MCF 10A (cell line): ENCODE measurements at regions of chr20 and their contacts with region 1.

Region 1: GRCh38 chr20:24992487-24993205 is at the start of gene APMAP:
- DNase-seq: peak; percentile 91
- H3K4me3 Mint-ChIP-seq: peak within 1 kb of the TSS; percentile 97
- H3K27ac Mint-ChIP-seq: peak within 1 kb of the TSS; percentile 97
- H3K4me1 Mint-ChIP-seq: peaks cover 60% of the 10 kb centered on the region
- H3K27me3 Mint-ChIP-seq: no peaks in the 10 kb centered on the region
- CTCF ChIP-seq: no peak
- total RNA-seq, gene APMAP: 75.3 and 104 TPM in 2 replicates

Region 2: DNA sequence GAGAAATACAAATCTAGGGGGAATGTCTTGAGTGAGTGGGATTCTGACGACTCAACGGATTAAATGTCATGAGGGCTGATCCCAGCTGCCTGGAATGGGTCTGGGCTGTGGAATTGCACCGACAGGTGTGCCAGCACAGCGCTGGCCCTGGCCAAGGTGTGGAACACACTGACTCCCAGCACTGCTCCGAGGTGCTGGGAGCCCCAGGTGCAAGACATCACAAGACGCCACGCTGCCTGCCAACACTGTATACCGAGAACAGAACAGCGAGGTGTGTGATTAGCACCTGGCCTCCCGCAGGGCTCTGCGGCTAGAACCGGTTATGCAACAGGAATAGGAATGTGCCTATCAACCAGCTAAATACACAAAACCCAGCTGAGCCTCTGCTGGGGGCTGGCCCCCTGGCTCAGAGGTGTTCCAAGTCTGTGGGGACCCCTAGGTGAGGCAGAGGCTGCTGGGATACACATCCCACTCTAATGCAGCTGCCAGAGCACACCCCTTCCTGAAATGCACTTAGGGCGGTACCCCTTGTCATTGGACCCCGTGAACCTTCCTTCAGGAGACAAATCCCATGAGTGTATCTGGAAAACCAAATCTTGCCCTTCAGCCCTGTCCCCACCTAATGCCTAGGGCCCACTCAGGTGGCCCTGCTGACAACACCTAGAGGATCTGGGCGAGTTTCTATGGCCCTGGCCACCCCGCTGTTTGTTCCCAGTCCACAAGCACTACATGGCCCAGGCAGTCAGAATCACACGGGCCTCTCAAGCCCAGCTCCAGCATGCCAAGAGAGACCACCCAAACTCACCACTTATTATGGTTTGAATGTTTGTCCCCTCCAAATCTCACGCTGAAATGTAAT is 24.8 kb after region 1 on chr20:
- CTCF ChIA-PET with region 1: interaction called, 19 read pairs
- POLR2A ChIA-PET with region 1: interaction called, 11 read pairs
- intact Hi-C with region 1: no loop called
- DNase-seq: peak; percentile 87
- H3K4me3 Mint-ChIP-seq: no peak overlapping the region
- H3K27ac Mint-ChIP-seq: peak overlapping the region; percentile 27
- H3K4me1 Mint-ChIP-seq: peaks cover 15% of the 10 kb centered on the region
- H3K27me3 Mint-ChIP-seq: no peaks in the 10 kb centered on the region
- CTCF ChIP-seq: no peak

Region 3: DNA sequence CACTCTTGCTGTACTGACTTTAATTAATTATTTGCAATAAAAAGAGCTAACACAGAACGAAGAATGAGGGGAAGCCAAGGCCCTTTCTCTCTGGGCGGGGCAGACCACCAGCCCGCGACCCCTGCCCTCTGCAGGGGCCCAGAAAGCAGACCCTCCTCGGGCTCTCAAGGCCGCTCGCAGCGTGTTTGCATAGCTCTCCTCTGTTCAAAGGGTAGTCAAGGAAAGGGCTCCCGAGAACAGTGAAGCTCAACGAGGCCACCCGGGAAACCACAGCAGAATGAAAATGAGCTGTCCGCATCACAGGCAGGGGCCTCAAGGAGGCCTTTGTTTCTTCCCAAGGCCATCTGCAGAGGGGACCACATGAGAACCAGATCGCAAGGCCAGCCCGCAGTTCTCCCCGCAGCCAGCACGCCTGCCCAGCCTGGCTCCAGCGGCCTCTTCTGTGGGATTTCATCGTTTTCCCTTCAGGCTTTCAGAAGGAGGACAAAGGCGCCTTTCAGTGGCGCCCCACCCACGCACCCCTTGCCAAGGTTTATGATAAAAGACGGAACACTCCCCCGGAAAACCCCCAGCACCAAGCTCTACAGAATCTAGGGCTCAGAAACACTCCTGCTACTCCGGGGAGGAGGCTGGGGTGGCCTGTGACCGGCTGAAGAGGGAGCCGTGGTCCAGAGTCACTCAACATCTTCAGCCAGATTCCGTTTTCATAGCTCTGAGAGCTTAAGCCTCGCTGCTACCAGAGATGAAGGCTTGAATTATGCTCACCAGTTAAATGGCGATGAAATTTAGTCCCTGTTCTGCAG is 40.0 kb after region 1 on chr20:
- CTCF ChIA-PET with region 1: interaction called, 43 read pairs
- POLR2A ChIA-PET with region 1: interaction called, 3 read pairs
- intact Hi-C with region 1: no loop called
- DNase-seq: no peak
- H3K4me3 Mint-ChIP-seq: no peak overlapping the region
- H3K27ac Mint-ChIP-seq: no peak overlapping the region
- H3K4me1 Mint-ChIP-seq: peaks cover 16% of the 10 kb centered on the region
- H3K27me3 Mint-ChIP-seq: no peaks in the 10 kb centered on the region
- CTCF ChIP-seq: no peak

Region 4: DNA sequence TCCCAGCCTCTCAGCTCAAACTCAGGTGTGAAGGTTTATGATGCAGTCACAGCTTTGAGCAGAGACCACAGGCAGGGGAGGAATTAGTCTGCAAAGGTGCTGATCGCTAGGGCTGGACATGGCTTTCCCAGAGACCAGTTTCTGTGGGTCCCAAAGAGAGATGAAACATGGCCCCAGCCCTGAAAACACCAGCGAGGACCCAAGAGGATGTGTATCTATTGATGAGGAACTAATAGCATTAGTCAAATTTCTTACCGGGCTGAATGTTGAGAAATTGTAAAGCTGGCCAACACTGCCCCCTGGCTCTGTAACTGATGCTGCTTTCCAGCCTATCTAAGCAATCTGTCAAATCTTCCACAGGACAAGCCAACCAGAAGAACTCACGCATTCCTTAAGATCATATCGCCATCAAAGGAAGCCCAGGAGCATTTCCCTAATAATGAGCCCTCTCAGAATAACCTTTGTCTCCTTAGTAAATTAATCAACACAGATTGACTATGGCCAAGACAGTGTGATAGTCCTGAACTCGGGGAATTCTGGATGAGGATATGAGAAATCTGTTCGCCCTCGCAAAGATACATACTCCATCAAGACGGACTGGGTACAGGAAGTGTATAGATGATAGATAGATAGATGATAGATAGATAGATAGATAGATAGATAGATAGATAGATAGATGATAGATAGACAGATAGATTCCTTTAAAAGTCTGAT is 73.1 kb after region 1 on chr20:
- CTCF ChIA-PET with region 1: interaction called, 500 read pairs
- POLR2A ChIA-PET with region 1: interaction called, 144 read pairs
- intact Hi-C with region 1: loop called (anchors 1 kb)
- DNase-seq: peak; percentile 59
- H3K4me3 Mint-ChIP-seq: no peak overlapping the region
- H3K27ac Mint-ChIP-seq: no peak overlapping the region
- H3K4me1 Mint-ChIP-seq: peaks cover 12% of the 10 kb centered on the region
- H3K27me3 Mint-ChIP-seq: peaks cover 68% of the 10 kb centered on the region
- CTCF ChIP-seq: peak; percentile 57

Region 5: DNA sequence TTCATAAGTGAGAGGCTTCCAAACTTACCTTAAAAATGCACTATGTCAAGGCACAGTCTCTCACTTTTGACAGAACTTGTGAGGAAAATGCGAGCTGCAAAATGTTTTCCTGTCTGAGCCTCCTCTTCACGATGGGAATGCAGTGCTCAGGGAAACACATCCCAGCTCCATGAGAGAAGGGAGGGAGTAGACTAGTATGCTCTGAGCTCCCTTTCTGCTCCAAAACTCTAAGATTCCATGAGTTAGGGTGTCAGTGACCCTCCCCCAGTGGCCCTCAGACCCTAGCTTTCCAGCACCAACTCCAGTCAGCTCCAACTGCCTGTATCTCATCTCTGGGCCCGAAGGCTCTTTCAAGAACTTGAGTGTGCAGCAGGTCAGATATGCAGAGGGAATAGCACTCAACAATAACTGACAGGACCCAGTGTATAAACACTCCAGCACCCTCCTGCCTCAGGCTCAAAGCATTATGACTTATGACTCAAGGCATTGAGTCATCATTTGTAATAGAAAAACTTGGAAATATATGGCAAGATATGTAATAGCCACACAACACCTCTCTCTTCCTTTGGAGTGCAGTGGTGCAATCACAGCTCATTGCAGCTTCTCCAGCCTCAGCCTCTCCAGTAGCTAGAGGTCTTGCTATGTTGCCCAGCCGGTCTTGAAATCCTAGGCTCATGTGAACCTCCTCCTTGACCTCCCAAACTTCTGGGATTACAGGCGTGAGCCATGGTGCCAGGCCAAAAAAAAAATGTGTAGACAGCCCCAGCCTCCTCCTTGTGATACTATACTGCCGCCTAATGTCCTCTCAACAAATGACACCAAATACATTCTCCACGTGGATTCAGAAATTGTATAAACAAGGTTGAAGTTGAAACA is 186.2 kb after region 1 on chr20:
- CTCF ChIA-PET with region 1: interaction called, 92 read pairs
- POLR2A ChIA-PET with region 1: interaction called, 57 read pairs
- intact Hi-C with region 1: loop called (anchors 1 kb)
- DNase-seq: peak; percentile 96
- H3K4me3 Mint-ChIP-seq: no peak overlapping the region
- H3K27ac Mint-ChIP-seq: peak overlapping the region; percentile 0
- H3K4me1 Mint-ChIP-seq: peaks cover 27% of the 10 kb centered on the region
- H3K27me3 Mint-ChIP-seq: no peaks in the 10 kb centered on the region
- CTCF ChIP-seq: peak; percentile 77

Region 6: GRCh38 chr20:25399037-25399430 is 406.4 kb after region 1 on chr20:
- CTCF ChIA-PET with region 1: interaction called, 104 read pairs
- POLR2A ChIA-PET with region 1: interaction called, 26 read pairs
- intact Hi-C with region 1: loop called (anchors 1 kb)
- DNase-seq: peak; percentile 76
- H3K4me3 Mint-ChIP-seq: no peak overlapping the region
- H3K27ac Mint-ChIP-seq: no peak overlapping the region
- H3K4me1 Mint-ChIP-seq: no peaks in the 10 kb centered on the region
- H3K27me3 Mint-ChIP-seq: no peaks in the 10 kb centered on the region
- CTCF ChIP-seq: peak; percentile 62